K562 (cell line): ENCODE measurements at regions of chr6 and their contacts with region 1.

Region 1: DNA sequence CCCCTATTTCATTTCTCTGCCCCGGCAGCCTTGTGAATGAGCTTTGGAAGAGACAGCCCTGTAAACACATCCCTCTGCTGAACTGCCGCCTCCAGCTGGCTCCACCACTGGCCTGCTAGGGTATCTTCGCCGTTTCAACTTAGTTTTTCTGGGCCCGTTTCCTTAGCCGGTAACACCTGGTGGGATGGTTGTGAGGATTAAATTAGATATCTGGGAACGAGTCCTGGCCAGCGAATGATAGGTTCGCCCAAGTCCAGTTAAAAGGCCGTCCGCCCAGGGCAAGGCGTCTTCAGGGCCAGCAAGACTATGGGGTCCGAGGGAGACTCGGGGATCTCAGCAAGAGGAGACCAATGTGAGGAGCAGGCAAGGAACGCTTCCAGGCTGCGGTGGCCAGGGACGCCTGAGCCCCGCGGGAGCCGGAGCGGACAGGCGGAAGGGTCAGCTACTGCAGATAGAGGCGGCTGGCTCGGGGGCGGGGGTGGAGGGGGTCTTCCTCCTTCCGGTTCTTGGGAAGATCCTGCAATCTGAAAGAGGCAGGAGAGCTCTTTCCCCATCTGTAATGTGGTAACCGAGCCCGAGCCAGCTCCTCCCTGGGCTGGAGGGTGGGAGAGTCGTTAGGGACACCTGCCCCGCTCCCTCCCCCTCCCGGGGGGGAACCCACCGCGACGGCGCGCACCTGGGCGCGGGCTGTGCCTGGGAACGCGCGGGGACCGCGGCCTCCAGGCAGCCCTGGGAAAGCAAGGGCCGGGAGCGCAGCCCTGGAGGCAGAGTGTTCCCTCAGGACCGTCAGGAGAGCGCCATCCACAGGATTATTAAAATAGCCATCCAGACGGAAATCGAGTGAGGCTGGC is 4.5 kb upstream of the PTCRA start:
- DNase-seq: no peak
- ATAC-seq: no peak
- H3K4me3 ChIP-seq: no peak overlapping the region
- H3K27ac ChIP-seq: no peak overlapping the region
- H3K4me1 ChIP-seq: peaks cover 5 to 13% of the 10 kb centered on the region in 2 experiments; a peak in 4 of 5 replicates
- H3K27me3 ChIP-seq: no peaks in the 10 kb centered on the region
- CTCF ChIP-seq: no peak
- EP300 ChIP-seq: no peak
- POLR2A ChIP-seq: no peak
- RAD21 ChIP-seq: no peak

Region 2: DNA sequence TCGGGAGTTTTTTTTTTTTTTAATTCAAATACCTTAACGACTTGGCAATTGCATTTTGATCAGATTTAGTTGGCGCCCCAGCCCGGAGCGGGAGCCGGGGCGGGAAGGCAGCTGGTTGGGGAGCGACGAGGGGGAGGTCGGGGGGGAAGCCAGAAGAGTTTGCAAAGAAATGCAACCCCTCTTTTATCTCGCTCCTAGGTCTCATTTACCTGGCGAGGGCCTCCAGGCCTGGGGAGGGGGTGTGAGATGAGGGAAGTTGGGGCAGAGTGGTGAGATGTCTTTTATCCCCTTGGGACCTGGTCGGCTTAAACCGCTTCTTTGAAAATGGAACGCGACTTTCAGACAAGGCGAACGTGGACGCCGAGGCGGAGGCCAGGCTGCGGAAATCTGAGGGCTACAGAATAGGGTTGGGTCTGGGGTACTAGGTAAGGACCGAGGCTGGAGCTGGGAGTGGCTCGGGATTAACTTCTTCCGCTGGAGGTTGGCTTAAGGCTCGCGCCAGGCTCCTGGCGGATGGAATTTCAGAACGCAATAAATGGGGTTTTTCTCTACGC is 1535.7 kb before region 1 on chr6:
- CTCF ChIA-PET with region 1: no interaction called
- POLR2A ChIA-PET with region 1: no interaction called
- in situ Hi-C with region 1: no loop called
- intact Hi-C with region 1: no loop called
- DNase-seq: no peak
- ATAC-seq: no peak
- H3K4me3 ChIP-seq: no peak overlapping the region
- H3K27ac ChIP-seq: no peak overlapping the region
- H3K4me1 ChIP-seq: peaks cover 0 to 26% of the 10 kb centered on the region in 2 experiments; a peak in 2 of 5 replicates
- H3K27me3 ChIP-seq: peaks cover 39 to 62% of the 10 kb centered on the region in 2 experiments
- CTCF ChIP-seq: no peak
- EP300 ChIP-seq: no peak
- POLR2A ChIP-seq: no peak
- RAD21 ChIP-seq: no peak

Region 3: GRCh38 chr6:42726485-42727086 is 184.8 kb before region 1 on chr6:
- CTCF ChIA-PET with region 1: no interaction called
- POLR2A ChIA-PET with region 1: no interaction called
- in situ Hi-C with region 1: no loop called
- intact Hi-C with region 1: no loop called
- DNase-seq: peak; percentile 87 to 92 (median 90)
- ATAC-seq: peak; percentile 90
- H3K4me3 ChIP-seq: no peak overlapping the region
- H3K27ac ChIP-seq: no peak overlapping the region
- H3K4me1 ChIP-seq: peaks cover 6 to 8% of the 10 kb centered on the region in 2 experiments; a peak in 4 of 5 replicates
- H3K27me3 ChIP-seq: peaks cover 7 to 11% of the 10 kb centered on the region in 2 experiments
- CTCF ChIP-seq: peak; percentile 94 to 98 (median 98)
- EP300 ChIP-seq: peak; percentile 27; the same call in 1 of the 2 replicates
- POLR2A ChIP-seq: no peak
- RAD21 ChIP-seq: peak; percentile 99

Region 4: GRCh38 chr6:42928986-42929820 is 17.8 kb after region 1 on chr6 and contains the start of gene CNPY3:
- CTCF ChIA-PET with region 1: no interaction called
- POLR2A ChIA-PET with region 1: interaction called, 10 read pairs
- in situ Hi-C with region 1: no loop called
- intact Hi-C with region 1: no loop called
- DNase-seq: peak; percentile 96 to 99 (median 96)
- ATAC-seq: peak; percentile 95
- H3K4me3 ChIP-seq: peak within 1 kb of the TSS; percentile 76
- H3K27ac ChIP-seq: peak within 1 kb of the TSS; percentile 90
- H3K4me1 ChIP-seq: peaks cover 17 to 28% of the 10 kb centered on the region in 2 experiments; a peak in 4 of 5 replicates
- H3K27me3 ChIP-seq: no peaks in the 10 kb centered on the region
- CTCF ChIP-seq: peak in 2 of 3 experiments; percentile 15 to 36; a peak in 2 of 6 replicates
- EP300 ChIP-seq: peak; percentile 31; the same call in 1 of the 2 replicates
- POLR2A ChIP-seq: peak; percentile 88
- RAD21 ChIP-seq: peak; percentile 1 to 3; a peak in 1 of 4 replicates
- polyA plus RNA-seq, gene CNPY3: 2.4 to 3.9 TPM